Activated CD4-positive, alpha-beta T cell treated with anti-CD3 and anti-CD28 coated beads, Interleukin-2, amount 10 ng/mL, durations not matched to agents 24 days and 14 days (primary cell): ENCODE measurements at regions of chr12 and their contacts with region 1.

Region 1: DNA sequence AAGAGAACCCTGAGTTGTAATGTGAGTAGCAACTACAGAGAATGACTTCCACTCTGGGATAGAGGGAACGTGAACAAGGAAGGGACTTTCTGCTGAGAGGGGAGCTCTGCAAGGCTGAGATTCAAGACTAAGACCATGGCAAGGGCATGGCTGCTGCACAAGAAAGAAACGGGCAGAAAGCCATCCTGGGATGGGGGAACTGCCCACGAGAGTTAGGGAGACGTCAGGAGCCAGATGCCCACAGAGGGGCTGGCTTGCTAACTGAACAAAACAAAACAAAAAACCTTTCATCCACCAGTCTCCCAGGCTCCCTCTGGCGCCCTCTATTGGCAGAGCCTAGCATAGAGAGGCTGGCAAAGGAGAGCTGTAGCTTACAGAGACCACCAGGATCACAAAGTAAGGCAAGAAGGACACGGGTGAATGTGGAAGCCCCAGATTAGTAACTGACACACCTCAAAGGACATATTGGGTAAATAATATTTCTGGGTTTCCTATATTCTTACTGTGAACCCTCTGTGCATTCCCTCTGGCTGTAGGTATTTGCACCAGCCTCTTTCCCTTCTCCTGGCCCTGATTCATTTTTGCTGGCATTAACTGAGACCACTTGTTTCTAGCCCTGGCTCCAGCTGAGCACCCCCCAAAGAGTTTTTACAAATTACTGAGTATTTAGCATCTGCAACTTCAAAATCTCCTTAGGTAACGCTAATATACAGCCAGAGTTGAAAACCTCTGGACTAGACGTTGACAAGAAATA is 338.3 kb downstream of the EMP1 start:
- DNase-seq: peak; percentile 85
- H3K4me3 Mint-ChIP-seq: no peak overlapping the region
- H3K27ac Mint-ChIP-seq: no peak overlapping the region
- H3K4me1 Mint-ChIP-seq: no peaks in the 10 kb centered on the region
- H3K27me3 Mint-ChIP-seq: peaks cover 6% of the 10 kb centered on the region

Region 2: DNA sequence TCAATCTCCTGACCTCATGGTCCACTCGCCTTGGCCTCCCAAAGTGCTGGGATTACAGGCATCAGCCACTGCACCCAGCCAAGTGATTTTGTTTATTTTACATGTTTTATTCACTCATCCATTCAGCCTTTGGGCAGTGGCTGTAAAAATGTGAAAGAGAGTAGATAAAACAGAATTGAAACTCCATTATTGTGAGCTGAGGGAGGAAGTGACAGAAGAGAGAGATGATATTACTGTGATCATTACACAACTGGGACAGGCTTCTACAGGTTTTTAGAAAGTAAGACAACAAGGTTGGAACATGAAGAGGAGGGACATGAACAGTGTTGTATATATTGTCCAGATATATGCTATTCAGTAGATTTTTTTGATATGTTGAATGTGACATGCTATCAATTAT is 898.2 kb before region 1 on chr12:
- intact Hi-C with region 1: no loop called
- DNase-seq: no peak
- H3K4me3 Mint-ChIP-seq: no peak overlapping the region
- H3K27ac Mint-ChIP-seq: no peak overlapping the region
- H3K4me1 Mint-ChIP-seq: no peaks in the 10 kb centered on the region
- H3K27me3 Mint-ChIP-seq: no peaks in the 10 kb centered on the region

Region 3: DNA sequence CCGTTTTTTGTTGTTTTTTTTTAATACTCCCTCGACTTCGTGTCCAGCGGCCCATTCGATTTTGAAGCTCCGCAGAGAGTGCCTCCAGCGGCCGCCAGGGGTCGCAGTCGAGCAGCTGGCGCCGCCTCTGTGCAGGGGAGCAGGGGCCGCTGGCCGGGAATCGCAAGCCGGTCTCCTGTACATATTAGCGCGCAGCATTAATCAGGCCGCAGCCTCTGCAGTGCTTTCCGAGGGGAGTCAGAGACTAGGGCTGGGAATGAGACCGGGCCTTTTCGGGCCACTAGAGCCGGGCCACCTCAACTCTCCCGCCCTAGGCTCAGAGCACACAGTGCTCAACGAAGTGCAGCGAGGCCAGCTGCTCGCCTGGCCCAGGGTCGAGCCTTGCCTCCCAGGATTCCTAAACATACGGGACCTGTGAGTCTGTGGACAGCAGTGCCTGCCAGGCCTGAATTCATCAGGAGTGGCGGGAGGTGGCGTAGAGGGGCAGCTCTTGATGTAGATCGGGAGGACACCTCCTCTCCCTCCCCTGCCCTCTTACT is 256.5 kb before region 1 on chr12:
- intact Hi-C with region 1: loop called (anchors 5 kb)
- DNase-seq: peak; percentile 87
- H3K4me3 Mint-ChIP-seq: no peak overlapping the region
- H3K27ac Mint-ChIP-seq: no peak overlapping the region
- H3K4me1 Mint-ChIP-seq: peaks cover 3% of the 10 kb centered on the region
- H3K27me3 Mint-ChIP-seq: peaks cover 34% of the 10 kb centered on the region

Region 4: DNA sequence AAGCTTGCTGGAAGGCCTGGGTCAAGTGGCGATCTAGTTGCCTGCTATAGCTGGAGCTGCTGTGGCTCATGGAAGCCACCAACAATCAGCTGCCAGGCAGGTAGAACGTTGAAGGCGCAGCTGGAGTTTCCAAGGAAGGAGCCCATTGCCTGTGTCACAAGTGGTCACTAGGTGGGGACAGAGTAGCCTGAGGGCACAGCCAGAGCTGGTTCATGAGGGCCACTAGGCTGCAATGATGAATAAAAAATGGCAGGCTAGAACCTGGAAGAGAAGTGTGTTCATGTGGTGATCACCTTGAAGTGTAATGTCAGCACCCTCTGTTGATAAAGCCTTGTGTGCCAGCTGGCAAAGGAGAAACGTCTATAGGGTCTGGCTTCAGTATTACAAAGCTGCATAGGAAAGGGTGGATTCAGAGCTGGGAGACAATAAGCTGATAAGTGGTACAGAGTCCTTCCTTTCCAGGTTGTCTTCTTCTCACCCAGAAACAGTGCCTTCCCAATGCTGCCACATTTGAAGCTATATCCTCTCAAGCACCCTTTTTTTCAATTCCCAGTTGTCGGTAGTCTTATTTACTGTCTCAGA is 172.5 kb before region 1 on chr12:
- intact Hi-C with region 1: loop called (anchors 5 kb)
- DNase-seq: peak; percentile 74
- H3K4me3 Mint-ChIP-seq: no peak overlapping the region
- H3K27ac Mint-ChIP-seq: no peak overlapping the region
- H3K4me1 Mint-ChIP-seq: no peaks in the 10 kb centered on the region
- H3K27me3 Mint-ChIP-seq: peaks cover 28% of the 10 kb centered on the region